ENCODE measurements at regions of chr1 and their contacts with region 1.

Region 1: GRCh38 chr1:32870615-32871363 is at the start of gene FNDC5:
- DNase-seq: no peak
- ATAC-seq: peak; percentile 42
- total RNA-seq, gene FNDC5: 139 TPM

Region 2: DNA sequence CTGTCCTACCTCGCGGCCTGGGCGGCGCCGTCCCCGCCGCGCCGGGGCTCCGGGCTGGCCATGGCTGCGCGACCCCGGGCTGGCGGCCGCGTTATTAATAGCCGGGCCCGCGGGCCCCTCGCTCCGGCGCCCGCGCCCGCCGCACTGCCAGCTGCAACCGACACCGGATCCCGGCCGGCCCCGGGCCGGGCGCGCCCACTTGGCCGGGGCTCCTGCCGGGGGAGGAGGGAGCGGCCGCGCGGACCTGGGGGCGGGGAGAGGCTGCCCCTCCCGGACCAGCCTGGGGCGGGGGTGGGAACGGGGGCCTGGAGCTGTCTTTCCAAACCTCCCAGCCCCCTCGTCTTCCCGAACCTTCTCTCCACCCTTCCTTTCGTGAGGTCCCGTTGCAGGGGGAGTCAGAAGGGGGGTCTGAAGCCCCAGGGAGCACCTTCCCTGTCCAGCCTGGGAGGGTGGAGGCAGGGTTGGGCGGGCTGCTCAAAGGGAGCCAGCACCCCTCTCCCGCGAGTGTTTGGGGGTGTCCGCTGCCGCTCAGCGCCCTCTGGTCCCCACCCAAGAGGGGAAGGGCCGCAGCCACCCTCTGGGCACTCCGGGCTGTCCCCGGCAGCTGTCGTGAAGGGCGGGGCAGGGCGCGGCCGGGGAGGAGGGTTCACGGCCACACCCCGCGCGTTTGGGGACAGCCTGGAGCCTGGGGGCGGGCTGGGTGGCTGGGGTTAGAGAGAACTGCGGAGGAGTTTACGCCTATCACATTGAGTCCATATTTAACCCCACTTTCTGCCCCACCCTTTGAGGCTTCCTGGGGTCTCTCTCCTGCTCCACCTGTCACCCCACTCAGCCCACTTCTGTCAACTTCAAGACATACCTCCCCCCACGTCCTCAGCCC is 167.9 kb before region 1 on chr1 and contains the start of gene SYNC:
- intact Hi-C with region 1: loop called (anchors 5 kb)
- DNase-seq: peak; percentile 83
- ATAC-seq: peak; percentile 87
- total RNA-seq, gene SYNC: 24.7 TPM

Region 3: GRCh38 chr1:32817159-32817814 is 53.5 kb before region 1 on chr1 and contains the starts of genes S100PBP and YARS1:
- intact Hi-C with region 1: loop called (anchors 2 kb)
- DNase-seq: peak; percentile 100
- ATAC-seq: peak; percentile 98
- total RNA-seq, gene S100PBP: 11.7 TPM
- total RNA-seq, gene YARS1: 29.8 TPM

Measured in Right ventricle myocardium inferior (tissue), 1 donor.